T-cell (primary cell): ENCODE measurements at regions of chr11 and their contacts with region 1.

Region 1: DNA sequence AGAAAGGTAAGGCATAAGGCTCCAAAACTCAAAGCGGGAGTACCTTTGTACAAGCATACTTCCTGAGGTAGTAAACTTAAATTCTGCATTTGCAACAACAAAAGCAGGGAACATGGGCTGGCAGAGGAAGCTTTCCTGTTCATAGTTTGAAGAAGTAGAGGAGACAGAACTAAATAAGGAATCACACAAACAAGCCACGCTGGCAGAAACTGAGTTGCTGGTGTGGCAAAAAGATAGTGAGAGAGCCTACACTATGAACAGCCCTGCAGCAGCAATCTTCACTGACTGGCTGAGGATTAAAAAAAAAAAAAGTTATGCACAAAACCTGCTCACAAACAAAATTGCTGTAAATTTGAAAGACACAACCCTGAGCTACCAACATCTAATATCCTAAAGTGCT is 46.5 kb downstream of the FCHSD2 start:
- DNase-seq: no peak
- ATAC-seq: no peak
- H3K4me3 ChIP-seq: no peak overlapping the region
- H3K4me3 Mint-ChIP-seq: no peak overlapping the region
- H3K27ac ChIP-seq: no peak overlapping the region
- H3K27ac Mint-ChIP-seq: peak overlapping the region in 1 of 2 donors; percentile 47
- H3K4me1 ChIP-seq: no peaks in the 10 kb centered on the region
- H3K4me1 Mint-ChIP-seq: peaks cover 30 to 44% (median 39%) of the 10 kb centered on the region in 3 donors
- H3K27me3 ChIP-seq: no peaks in the 10 kb centered on the region
- H3K27me3 Mint-ChIP-seq: no peaks in the 10 kb centered on the region

Region 2: DNA sequence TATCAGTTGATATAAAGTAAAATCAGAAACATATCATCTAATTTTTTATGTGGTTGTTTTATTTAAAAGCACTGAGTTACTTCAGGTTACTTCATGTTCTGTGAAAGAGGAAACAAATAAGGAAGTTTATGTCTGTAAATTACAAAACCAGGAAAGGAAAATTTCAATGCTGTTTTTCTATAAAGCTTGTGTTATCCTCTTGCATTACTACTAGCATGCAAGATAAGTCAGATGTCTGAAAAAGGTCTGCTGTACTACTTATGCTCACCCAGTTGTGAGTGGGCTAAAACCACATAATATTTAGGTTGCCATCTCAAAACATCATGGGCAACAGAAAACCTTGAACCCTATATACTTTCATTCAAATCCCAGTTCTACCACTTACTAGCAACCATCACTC is 159.9 kb before region 1 on chr11:
- CTCF ChIA-PET with region 1: no interaction called
- POLR2A ChIA-PET with region 1: no interaction called
- DNase-seq: no peak
- ATAC-seq: no peak
- H3K4me3 ChIP-seq: no peak overlapping the region
- H3K4me3 Mint-ChIP-seq: no peak overlapping the region
- H3K27ac ChIP-seq: no peak overlapping the region
- H3K27ac Mint-ChIP-seq: no peak overlapping the region
- H3K4me1 ChIP-seq: no peaks in the 10 kb centered on the region
- H3K4me1 Mint-ChIP-seq: peaks cover 0 to 8% (median 0%) of the 10 kb centered on the region in 3 donors
- H3K27me3 ChIP-seq: no peaks in the 10 kb centered on the region
- H3K27me3 Mint-ChIP-seq: no peaks in the 10 kb centered on the region

Region 3: GRCh38 chr11:73217131-73217762 is 121.6 kb after region 1 on chr11:
- CTCF ChIA-PET with region 1: no interaction called
- POLR2A ChIA-PET with region 1: interaction called in 1 of 2 experiments, 10 read pairs
- DNase-seq: no peak
- ATAC-seq: no peak
- H3K4me3 ChIP-seq: no peak overlapping the region
- H3K4me3 Mint-ChIP-seq: peak overlapping the region; percentile 34 to 65 (median 49)
- H3K27ac ChIP-seq: no peak overlapping the region
- H3K27ac Mint-ChIP-seq: peak overlapping the region in 1 of 2 donors; percentile 40
- H3K4me1 ChIP-seq: peaks cover 0 to 15% of the 10 kb centered on the region in 2 experiments
- H3K4me1 Mint-ChIP-seq: peaks cover 5 to 13% (median 8%) of the 10 kb centered on the region in 3 donors
- H3K27me3 ChIP-seq: peaks cover 0 to 49% of the 10 kb centered on the region in 2 experiments
- H3K27me3 Mint-ChIP-seq: peaks cover 14 to 36% of the 10 kb centered on the region in 2 donors